Activated CD4-positive, alpha-beta memory T cell treated with anti-CD3 and anti-CD28 coated beads for 36 hours (primary cell): ENCODE measurements at regions of chr12 and their contacts with region 1.

Region 1: GRCh38 chr12:24600996-24601395 is 347.9 kb downstream of the BCAT1 start:
- DNase-seq: no peak
- H3K4me3 Mint-ChIP-seq: no peak overlapping the region
- H3K27ac Mint-ChIP-seq: peak overlapping the region; percentile 42
- H3K4me1 Mint-ChIP-seq: peaks cover 5% of the 10 kb centered on the region
- H3K27me3 Mint-ChIP-seq: peaks cover 5% of the 10 kb centered on the region

Region 2: GRCh38 chr12:24297516-24297915 is 303.5 kb before region 1 on chr12:
- CTCF ChIA-PET with region 1: no interaction called
- POLR2A ChIA-PET with region 1: no interaction called
- intact Hi-C with region 1: no loop called
- DNase-seq: no peak
- H3K4me3 Mint-ChIP-seq: no peak overlapping the region
- H3K27ac Mint-ChIP-seq: no peak overlapping the region
- H3K4me1 Mint-ChIP-seq: no peaks in the 10 kb centered on the region
- H3K27me3 Mint-ChIP-seq: no peaks in the 10 kb centered on the region

Region 3: GRCh38 chr12:24551163-24551786 is 49.7 kb before region 1 on chr12:
- CTCF ChIA-PET with region 1: no interaction called
- POLR2A ChIA-PET with region 1: no interaction called
- intact Hi-C with region 1: no loop called
- DNase-seq: no peak
- H3K4me3 Mint-ChIP-seq: no peak overlapping the region
- H3K27ac Mint-ChIP-seq: no peak overlapping the region
- H3K4me1 Mint-ChIP-seq: no peaks in the 10 kb centered on the region
- H3K27me3 Mint-ChIP-seq: peaks cover 2% of the 10 kb centered on the region

Region 4: GRCh38 chr12:24822121-24822899 is 221.3 kb after region 1 on chr12:
- CTCF ChIA-PET with region 1: no interaction called
- POLR2A ChIA-PET with region 1: no interaction called
- intact Hi-C with region 1: loop called (anchors 5 kb)
- DNase-seq: no peak
- H3K4me3 Mint-ChIP-seq: no peak overlapping the region
- H3K27ac Mint-ChIP-seq: peak overlapping the region; percentile 50
- H3K4me1 Mint-ChIP-seq: peaks cover 30% of the 10 kb centered on the region
- H3K27me3 Mint-ChIP-seq: no peaks in the 10 kb centered on the region

Region 5: GRCh38 chr12:25276199-25276937 is 675.4 kb after region 1 on chr12:
- CTCF ChIA-PET with region 1: no interaction called
- POLR2A ChIA-PET with region 1: no interaction called
- intact Hi-C with region 1: no loop called
- DNase-seq: peak; percentile 89
- H3K4me3 Mint-ChIP-seq: no peak overlapping the region
- H3K27ac Mint-ChIP-seq: peak overlapping the region; percentile 42
- H3K4me1 Mint-ChIP-seq: peaks cover 24% of the 10 kb centered on the region
- H3K27me3 Mint-ChIP-seq: no peaks in the 10 kb centered on the region